Mammary epithelial cell (primary cell): ENCODE measurements at regions of chr4 and their contacts with region 1.

Region 1: GRCh38 chr4:158768555-158769174 is at the start of gene FNIP2:
- DNase-seq: peak; percentile 61
- H3K4me3 ChIP-seq: peak within 1 kb of the TSS; percentile 67 to 98 (median 94)
- H3K27ac ChIP-seq: peak within 1 kb of the TSS; percentile 49
- H3K4me1 ChIP-seq: peaks cover 13% of the 10 kb centered on the region
- H3K27me3 ChIP-seq: no peaks in the 10 kb centered on the region
- CTCF ChIP-seq: no peak
- total RNA-seq, gene FNIP2: 13.0 to 29.5 TPM

Region 2: DNA sequence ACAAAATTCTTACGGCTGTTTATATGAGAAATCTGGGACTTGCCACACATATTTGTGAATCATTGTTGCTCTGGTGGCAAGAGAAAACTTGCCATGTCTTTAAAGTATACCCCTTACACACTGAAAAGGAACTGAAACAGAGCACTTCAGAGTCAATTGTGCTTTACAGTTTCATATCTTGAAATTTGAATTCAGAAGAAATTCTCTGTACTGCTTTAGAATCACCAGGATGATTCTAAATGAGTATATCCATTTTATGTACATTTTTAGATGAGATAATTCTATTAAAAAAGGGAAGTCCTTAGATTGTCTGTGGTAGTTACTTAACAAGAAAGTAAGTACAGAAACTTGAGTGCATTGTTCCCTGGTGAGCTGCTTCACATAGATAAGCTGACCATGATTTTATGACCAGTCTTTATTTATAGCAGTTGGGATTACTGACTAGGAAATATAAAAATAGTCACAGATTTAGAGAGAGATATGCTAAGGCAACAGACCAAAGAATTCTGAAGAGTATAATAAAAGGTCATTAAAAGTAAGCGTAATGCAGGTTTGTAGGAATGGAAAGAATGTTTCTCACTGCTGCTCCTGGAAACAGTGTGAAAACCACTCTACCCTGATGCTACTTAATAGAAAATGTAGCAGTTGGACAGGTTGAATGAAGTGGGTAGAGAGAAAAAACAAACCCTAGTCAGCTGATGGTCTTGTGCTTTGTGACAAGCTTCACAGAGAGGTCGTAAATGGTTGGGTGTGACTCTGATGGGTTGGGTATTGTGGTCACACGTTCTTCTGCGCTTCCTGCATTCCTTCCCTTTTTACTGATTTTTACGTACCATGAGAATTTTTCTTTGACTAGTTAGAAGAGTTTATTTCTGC is 41.2 kb after region 1 on chr4:
- CTCF ChIA-PET with region 1: no interaction called
- dilution Hi-C with region 1: no loop called
- in situ Hi-C with region 1: no loop called
- intact Hi-C with region 1: loop called (anchors 2 kb)
- DNase-seq: peak; percentile 58
- H3K4me3 ChIP-seq: no peak overlapping the region
- H3K27ac ChIP-seq: peak overlapping the region; percentile 50
- H3K4me1 ChIP-seq: peaks cover 42% of the 10 kb centered on the region
- H3K27me3 ChIP-seq: no peaks in the 10 kb centered on the region
- CTCF ChIP-seq: no peak

Region 3: DNA sequence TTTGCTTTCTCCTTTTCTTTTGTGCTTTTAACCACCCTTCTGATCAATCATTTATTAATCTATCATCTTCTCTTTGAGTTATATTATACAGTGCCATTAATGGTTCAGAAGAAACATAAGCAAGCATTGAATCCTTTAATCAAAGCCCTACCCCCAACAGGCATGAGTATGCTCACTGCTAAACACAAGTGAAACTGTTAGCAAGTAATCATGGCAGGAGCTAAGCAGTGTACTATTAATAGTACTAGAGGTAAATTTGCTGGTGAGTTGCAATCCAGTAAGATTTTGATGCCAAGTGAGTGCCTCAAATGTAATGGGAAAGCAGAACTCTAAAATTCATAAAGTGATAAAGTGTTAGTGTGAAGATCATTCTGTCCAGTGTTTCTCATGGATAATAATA is 57.4 kb after region 1 on chr4:
- CTCF ChIA-PET with region 1: no interaction called
- dilution Hi-C with region 1: loop called (anchors 5 kb)
- in situ Hi-C with region 1: no loop called
- intact Hi-C with region 1: no loop called
- DNase-seq: no peak
- H3K4me3 ChIP-seq: no peak overlapping the region
- H3K27ac ChIP-seq: no peak overlapping the region
- H3K4me1 ChIP-seq: peaks cover 8% of the 10 kb centered on the region
- H3K27me3 ChIP-seq: no peaks in the 10 kb centered on the region
- CTCF ChIP-seq: no peak

Region 4: GRCh38 chr4:158836018-158836369 is 67.3 kb after region 1 on chr4:
- CTCF ChIA-PET with region 1: no interaction called
- dilution Hi-C with region 1: no loop called
- in situ Hi-C with region 1: no loop called
- intact Hi-C with region 1: loop called (anchors 2 kb)
- DNase-seq: no peak
- H3K4me3 ChIP-seq: no peak overlapping the region
- H3K27ac ChIP-seq: no peak overlapping the region
- H3K4me1 ChIP-seq: peaks cover 10% of the 10 kb centered on the region
- H3K27me3 ChIP-seq: no peaks in the 10 kb centered on the region
- CTCF ChIP-seq: no peak

Region 5: DNA sequence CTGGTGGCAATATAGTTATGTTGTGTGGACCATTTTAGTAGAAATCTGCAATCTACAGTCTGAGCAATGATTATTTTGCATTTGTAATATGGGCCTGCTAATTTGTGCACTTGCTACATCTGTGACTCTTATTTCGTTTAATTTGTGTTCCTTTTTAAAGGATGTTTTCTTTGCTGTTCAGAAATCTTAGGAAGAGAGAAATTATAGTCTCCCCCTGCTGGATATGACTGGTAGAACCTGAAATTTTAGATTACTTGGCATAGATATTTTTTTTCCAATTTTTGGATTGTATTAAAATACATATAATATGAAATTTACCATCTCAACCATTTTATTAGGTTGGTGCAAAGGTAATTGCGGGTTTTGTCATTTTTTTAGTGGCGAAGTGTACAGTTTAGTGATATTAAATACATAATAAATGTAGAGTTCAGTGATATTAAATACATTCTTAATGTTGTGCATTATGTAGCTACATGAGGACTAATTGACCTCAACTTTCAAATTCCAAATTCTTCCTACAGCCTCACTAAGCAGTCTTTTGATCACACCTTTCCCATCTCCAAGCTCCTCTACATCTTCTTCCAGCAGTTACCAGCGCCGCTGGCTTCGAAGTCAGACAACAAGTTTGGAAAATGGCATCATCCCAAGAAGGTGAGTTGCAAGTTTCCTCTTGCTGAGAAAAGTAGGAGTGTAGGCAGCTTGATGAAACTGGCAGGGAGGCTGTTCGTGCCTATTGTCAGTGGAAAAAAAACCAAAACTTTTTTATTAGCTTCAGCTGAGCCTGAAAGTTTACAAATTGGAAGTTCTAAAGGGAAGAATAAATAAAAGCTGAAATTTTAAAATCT is 82.4 kb after region 1 on chr4:
- CTCF ChIA-PET with region 1: no interaction called
- dilution Hi-C with region 1: no loop called
- in situ Hi-C with region 1: no loop called
- intact Hi-C with region 1: loop called (anchors 1 kb)
- DNase-seq: no peak
- H3K4me3 ChIP-seq: no peak overlapping the region
- H3K27ac ChIP-seq: no peak overlapping the region
- H3K4me1 ChIP-seq: no peaks in the 10 kb centered on the region
- H3K27me3 ChIP-seq: no peaks in the 10 kb centered on the region
- CTCF ChIP-seq: peak; percentile 55 to 56